Caco-2 (cell line): ENCODE measurements at regions of chr16 and their contacts with region 1.

Region 1: DNA sequence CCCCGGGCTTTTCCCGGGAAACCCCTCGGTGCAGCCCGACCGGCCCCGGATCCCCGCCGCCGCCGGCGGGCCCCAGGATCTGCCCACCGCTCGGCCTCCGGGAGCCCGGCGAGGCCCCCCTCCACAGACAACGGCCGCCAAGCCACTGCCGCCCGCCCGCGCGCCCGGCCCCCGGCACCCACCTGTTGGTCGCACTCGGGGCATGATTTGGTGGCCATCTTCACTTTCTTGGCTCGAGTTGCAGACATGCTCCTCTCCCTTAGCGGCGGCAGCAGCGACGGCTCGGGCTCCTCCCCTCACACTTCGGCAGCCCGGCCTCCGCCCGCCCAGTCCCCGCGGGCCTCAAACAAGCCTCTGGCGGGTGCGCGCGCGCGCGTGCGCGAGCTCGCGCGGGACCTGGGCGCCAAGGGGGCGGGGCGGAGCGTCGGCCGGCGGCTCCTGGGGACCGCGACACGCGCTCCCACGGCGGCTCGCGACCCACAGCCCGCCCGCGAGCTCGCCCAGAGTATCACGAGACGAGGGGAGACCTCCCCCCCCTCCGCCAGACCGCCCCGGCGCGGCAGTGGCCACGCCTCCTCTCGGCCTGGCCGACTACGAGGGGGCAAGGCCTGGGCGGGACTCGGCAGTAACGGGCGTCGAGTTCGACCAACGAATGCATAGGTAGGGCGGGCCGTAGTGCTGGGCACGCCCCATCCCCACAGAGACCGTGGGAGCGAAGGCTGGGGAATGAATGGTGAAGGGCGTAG is at the start of gene C16orf87:
- DNase-seq: peak; percentile 92 to 93
- H3K4me3 ChIP-seq: peak within 1 kb of the TSS; percentile 78
- H3K4me3 Mint-ChIP-seq: peak within 1 kb of the TSS; percentile 93
- H3K27ac Mint-ChIP-seq: peak within 1 kb of the TSS; percentile 80
- H3K4me1 ChIP-seq: peaks cover 17% of the 10 kb centered on the region
- H3K4me1 Mint-ChIP-seq: peaks cover 6% of the 10 kb centered on the region
- H3K27me3 ChIP-seq: no peaks in the 10 kb centered on the region
- H3K27me3 Mint-ChIP-seq: no peaks in the 10 kb centered on the region
- CTCF ChIP-seq: no peak
- total RNA-seq, gene C16orf87: 11.9 and 12.1 TPM in 2 replicates

Region 2: DNA sequence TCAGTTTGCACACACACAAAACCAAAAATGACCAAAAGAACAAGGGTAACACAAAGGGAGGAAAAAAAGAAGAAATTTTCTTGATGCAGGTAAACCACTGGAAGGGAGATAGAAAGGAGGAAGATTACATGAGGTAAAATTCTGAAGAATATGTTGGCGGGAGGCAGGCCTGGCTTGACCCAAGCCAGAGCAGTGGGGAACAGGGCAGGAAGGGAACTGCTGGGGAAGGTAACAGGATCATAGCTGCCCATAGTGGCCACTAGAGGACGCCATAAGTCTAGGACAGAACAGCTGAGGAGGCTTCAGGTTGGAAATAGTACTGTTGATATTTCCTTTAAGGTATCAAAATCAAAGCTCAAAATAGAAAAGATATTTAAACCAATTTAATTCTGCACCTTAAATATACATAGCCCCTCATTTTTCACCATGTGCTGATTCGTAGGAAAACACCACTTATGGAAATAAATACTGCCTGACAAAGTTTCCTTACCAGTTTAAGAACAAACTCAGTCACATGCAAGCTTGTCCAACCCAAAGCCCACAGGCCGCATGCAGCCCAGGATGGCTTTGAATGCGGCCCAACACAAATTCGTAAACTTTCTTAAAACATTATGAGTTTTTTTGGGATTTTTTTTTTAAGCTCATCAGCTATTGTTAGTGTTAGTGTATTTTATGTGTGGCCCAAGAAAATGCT is 157.6 kb before region 1 on chr16:
- CTCF ChIA-PET with region 1: interaction called, 3 read pairs
- POLR2A ChIA-PET with region 1: interaction called, 13 read pairs
- intact Hi-C with region 1: no loop called
- DNase-seq: peak; percentile 62 to 67
- H3K4me3 ChIP-seq: no peak overlapping the region
- H3K4me3 Mint-ChIP-seq: no peak overlapping the region
- H3K27ac Mint-ChIP-seq: no peak overlapping the region
- H3K4me1 ChIP-seq: peaks cover 2% of the 10 kb centered on the region; the same call in 1 of the 2 replicates
- H3K4me1 Mint-ChIP-seq: peaks cover 3% of the 10 kb centered on the region
- H3K27me3 ChIP-seq: no peaks in the 10 kb centered on the region
- H3K27me3 Mint-ChIP-seq: no peaks in the 10 kb centered on the region
- CTCF ChIP-seq: peak; percentile 79 to 97

Region 3: DNA sequence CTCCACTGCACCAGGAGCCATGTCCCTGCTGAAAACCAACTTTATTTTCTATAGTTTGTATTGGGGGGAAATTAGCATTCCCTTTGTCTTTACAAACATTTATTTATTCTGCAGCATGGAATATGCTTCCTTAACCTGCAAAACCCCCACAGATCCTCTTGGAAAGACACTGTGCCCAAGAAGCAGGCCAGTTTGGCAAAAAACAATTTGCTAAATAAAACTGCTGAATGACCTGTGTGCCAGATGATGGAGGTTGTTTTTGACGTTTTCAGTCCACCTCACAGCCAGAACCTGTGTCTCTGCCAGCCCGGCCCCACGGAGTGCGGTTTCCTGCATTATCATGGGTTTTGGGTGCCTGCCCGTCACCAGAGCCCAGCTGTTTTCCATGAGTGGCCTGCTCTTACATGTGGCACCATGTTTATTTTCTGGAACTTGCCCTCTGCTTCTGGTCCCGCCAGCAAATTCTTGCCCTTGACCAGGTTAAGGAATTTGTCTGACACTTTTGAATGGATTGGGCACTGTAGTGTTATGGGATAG is 115.2 kb before region 1 on chr16:
- CTCF ChIA-PET with region 1: no interaction called
- POLR2A ChIA-PET with region 1: interaction called, 14 read pairs
- intact Hi-C with region 1: no loop called
- DNase-seq: no peak
- H3K4me3 ChIP-seq: no peak overlapping the region
- H3K4me3 Mint-ChIP-seq: no peak overlapping the region
- H3K27ac Mint-ChIP-seq: no peak overlapping the region
- H3K4me1 ChIP-seq: no peaks in the 10 kb centered on the region
- H3K4me1 Mint-ChIP-seq: no peaks in the 10 kb centered on the region
- H3K27me3 ChIP-seq: no peaks in the 10 kb centered on the region
- H3K27me3 Mint-ChIP-seq: no peaks in the 10 kb centered on the region
- CTCF ChIP-seq: no peak

Region 4: GRCh38 chr16:46789499-46790414 is 41.3 kb before region 1 on chr16:
- CTCF ChIA-PET with region 1: no interaction called
- POLR2A ChIA-PET with region 1: no interaction called
- intact Hi-C with region 1: loop called (anchors 1 kb)
- DNase-seq: peak; percentile 77 to 79
- H3K4me3 ChIP-seq: peak overlapping the region; percentile 55
- H3K4me3 Mint-ChIP-seq: peak overlapping the region; percentile 78
- H3K27ac Mint-ChIP-seq: peak overlapping the region; percentile 48
- H3K4me1 ChIP-seq: peaks cover 18% of the 10 kb centered on the region
- H3K4me1 Mint-ChIP-seq: peaks cover 12% of the 10 kb centered on the region
- H3K27me3 ChIP-seq: no peaks in the 10 kb centered on the region
- H3K27me3 Mint-ChIP-seq: no peaks in the 10 kb centered on the region
- CTCF ChIP-seq: no peak